ENCODE measurements at regions of chr1 and their contacts with region 1.

Region 1: DNA sequence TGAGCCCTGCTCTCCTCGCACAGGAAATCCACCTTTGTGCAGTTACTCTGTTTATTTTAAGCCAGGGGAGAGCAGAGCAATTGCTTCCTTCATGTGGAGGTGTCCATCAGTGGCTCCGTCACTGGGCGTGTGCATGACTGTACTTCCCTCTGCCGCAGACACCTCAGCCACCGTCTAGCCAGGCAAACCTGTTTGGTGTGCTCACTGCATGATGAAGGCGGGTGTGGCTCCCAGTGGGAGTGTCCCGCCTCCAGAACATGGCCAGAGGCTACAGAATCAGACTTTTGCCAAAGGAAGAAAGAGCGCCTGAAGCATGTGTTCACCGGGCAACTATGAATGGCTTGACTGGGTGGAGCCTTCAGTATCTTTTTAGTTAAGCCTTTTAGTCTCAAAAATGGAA is 26.1 kb upstream of the LAMC2 start:
- DNase-seq: peak; percentile 99
- H3K4me3 Mint-ChIP-seq: peak overlapping the region; percentile 48
- H3K27ac Mint-ChIP-seq: no peak overlapping the region
- H3K4me1 Mint-ChIP-seq: peaks cover 27% of the 10 kb centered on the region
- H3K27me3 Mint-ChIP-seq: no peaks in the 10 kb centered on the region
- CTCF ChIP-seq: no peak

Region 2: GRCh38 chr1:183051546-183051945 is 108.4 kb before region 1 on chr1:
- CTCF ChIA-PET with region 1: no interaction called
- POLR2A ChIA-PET with region 1: no interaction called
- intact Hi-C with region 1: no loop called
- DNase-seq: peak; percentile 39
- H3K4me3 Mint-ChIP-seq: no peak overlapping the region
- H3K27ac Mint-ChIP-seq: peak overlapping the region; percentile 26
- H3K4me1 Mint-ChIP-seq: peaks cover 34% of the 10 kb centered on the region
- H3K27me3 Mint-ChIP-seq: no peaks in the 10 kb centered on the region
- CTCF ChIP-seq: no peak

Region 3: GRCh38 chr1:183139281-183139942 is 20.5 kb before region 1 on chr1:
- CTCF ChIA-PET with region 1: interaction called, 3 read pairs
- POLR2A ChIA-PET with region 1: interaction called, 11 read pairs
- intact Hi-C with region 1: loop called (anchors 1 kb)
- DNase-seq: peak; percentile 81
- H3K4me3 Mint-ChIP-seq: peak overlapping the region; percentile 1
- H3K27ac Mint-ChIP-seq: peak overlapping the region; percentile 99
- H3K4me1 Mint-ChIP-seq: peaks cover 27% of the 10 kb centered on the region
- H3K27me3 Mint-ChIP-seq: no peaks in the 10 kb centered on the region
- CTCF ChIP-seq: no peak

Region 4: DNA sequence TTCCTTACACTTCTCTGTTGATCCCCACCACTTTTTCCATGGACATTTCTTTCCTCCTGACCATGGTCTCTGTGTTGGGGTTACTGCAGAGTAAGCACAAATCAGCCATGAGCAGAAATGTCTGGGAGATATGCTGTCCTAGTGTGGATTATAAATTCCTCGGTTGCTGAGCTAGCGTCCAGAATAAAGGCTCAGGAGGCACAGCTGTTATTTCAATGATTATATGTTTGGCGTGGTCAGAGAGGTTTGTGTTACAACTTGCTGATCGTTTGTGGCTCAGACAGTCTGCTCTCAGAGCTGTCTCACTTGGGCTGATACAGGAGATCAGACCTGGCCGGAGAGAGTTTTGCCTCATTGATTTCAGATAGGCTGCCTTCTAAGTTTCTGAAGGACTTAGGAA is 11.4 kb before region 1 on chr1:
- CTCF ChIA-PET with region 1: interaction called, 3 read pairs
- POLR2A ChIA-PET with region 1: interaction called, 18 read pairs
- intact Hi-C with region 1: no loop called
- DNase-seq: no peak
- H3K4me3 Mint-ChIP-seq: no peak overlapping the region
- H3K27ac Mint-ChIP-seq: peak overlapping the region; percentile 95
- H3K4me1 Mint-ChIP-seq: peaks cover 31% of the 10 kb centered on the region
- H3K27me3 Mint-ChIP-seq: no peaks in the 10 kb centered on the region
- CTCF ChIP-seq: no peak

Region 5: DNA sequence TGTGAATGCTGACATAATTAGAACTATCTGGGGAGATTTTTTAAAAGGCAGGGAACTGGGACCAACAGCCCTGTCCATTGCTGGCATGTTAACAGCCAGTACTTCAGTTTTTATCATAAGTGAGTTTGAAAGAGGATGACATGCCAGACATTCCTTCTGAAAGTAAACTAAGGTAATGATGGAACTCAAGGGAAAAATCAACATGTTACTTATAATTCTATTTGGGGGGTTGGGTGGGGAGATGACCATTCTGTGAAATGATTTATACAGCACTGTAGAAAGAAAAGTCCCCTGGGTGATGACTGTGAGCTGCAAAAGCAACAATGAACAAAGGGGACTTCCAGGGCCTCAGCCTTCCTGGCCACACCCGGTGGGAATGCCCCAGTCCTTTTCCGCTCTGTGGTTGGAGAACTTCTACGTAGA is 20.7 kb after region 1 on chr1:
- CTCF ChIA-PET with region 1: interaction called, 8 read pairs
- POLR2A ChIA-PET with region 1: interaction called, 69 read pairs
- intact Hi-C with region 1: loop called (anchors 1 kb)
- DNase-seq: peak; percentile 87
- H3K4me3 Mint-ChIP-seq: peak overlapping the region; percentile 23
- H3K27ac Mint-ChIP-seq: peak overlapping the region; percentile 96
- H3K4me1 Mint-ChIP-seq: peaks cover 42% of the 10 kb centered on the region
- H3K27me3 Mint-ChIP-seq: no peaks in the 10 kb centered on the region
- CTCF ChIP-seq: no peak

Region 6: GRCh38 chr1:183185941-183186490 is 26.1 kb after region 1 on chr1 and contains the start of gene LAMC2:
- CTCF ChIA-PET with region 1: interaction called, 8 read pairs
- POLR2A ChIA-PET with region 1: interaction called, 69 read pairs
- intact Hi-C with region 1: loop called (anchors 1 kb)
- DNase-seq: peak; percentile 98
- H3K4me3 Mint-ChIP-seq: peak within 1 kb of the TSS; percentile 92
- H3K27ac Mint-ChIP-seq: peak within 1 kb of the TSS; percentile 98
- H3K4me1 Mint-ChIP-seq: peaks cover 36% of the 10 kb centered on the region
- H3K27me3 Mint-ChIP-seq: no peaks in the 10 kb centered on the region
- CTCF ChIP-seq: peak; percentile 70
- total RNA-seq, gene LAMC2: 751 and 884 TPM in 2 replicates